WTC11 (cell line): ENCODE measurements at regions of chr9 and their contacts with region 1.

Region 1: GRCh38 chr9:97895695-97896332 is 26.5 kb downstream of the TRMO start:
- DNase-seq: peak; percentile 64
- ATAC-seq: peak; percentile 100
- H3K4me3 Mint-ChIP-seq: no peak overlapping the region
- H3K27ac Mint-ChIP-seq: no peak overlapping the region
- H3K4me1 Mint-ChIP-seq: peaks cover 2% of the 10 kb centered on the region; the same call in 1 of the 2 replicates
- H3K27me3 Mint-ChIP-seq: peaks cover 32% of the 10 kb centered on the region
- CTCF ChIP-seq: no peak

Region 2: DNA sequence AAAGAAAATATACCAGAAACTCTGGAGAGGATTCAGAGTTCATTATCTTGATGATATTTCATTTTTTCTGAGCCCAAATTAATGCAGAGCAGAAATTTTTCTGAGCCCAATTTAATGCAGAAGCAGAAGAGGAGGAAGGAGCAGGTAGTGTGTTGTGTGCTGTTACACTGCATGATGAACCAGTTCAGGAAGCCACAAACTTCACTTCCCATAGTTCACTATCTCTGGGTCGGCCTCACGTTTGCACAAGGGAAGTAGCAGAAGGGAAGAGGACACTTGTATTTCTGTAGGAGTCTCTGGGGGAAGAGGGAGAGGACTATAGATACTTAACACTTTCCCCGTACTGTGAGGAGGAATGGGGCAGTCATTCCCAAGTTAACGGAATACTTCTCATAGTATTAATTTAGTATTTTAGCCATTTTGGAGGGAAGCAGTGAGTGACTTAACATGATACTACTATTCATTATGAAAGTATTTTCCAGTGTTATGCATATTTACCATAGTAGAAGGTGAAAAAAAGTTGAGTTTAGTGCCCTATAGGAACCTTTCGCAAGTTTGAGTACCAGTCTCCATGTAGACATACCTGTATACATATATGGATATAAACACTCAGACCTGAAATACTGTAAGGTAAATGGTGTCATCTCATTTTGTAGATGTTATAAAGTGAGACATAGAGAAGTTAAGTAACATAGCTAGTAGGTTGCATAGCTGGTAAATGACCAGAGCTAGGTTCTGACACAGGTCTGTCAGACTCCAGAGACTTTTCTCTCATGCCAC is 228.7 kb before region 1 on chr9:
- CTCF ChIA-PET with region 1: no interaction called
- POLR2A ChIA-PET with region 1: no interaction called
- DNase-seq: no peak
- ATAC-seq: no peak
- H3K4me3 Mint-ChIP-seq: no peak overlapping the region
- H3K27ac Mint-ChIP-seq: no peak overlapping the region
- H3K4me1 Mint-ChIP-seq: no peaks in the 10 kb centered on the region
- H3K27me3 Mint-ChIP-seq: no peaks in the 10 kb centered on the region
- CTCF ChIP-seq: no peak

Region 3: DNA sequence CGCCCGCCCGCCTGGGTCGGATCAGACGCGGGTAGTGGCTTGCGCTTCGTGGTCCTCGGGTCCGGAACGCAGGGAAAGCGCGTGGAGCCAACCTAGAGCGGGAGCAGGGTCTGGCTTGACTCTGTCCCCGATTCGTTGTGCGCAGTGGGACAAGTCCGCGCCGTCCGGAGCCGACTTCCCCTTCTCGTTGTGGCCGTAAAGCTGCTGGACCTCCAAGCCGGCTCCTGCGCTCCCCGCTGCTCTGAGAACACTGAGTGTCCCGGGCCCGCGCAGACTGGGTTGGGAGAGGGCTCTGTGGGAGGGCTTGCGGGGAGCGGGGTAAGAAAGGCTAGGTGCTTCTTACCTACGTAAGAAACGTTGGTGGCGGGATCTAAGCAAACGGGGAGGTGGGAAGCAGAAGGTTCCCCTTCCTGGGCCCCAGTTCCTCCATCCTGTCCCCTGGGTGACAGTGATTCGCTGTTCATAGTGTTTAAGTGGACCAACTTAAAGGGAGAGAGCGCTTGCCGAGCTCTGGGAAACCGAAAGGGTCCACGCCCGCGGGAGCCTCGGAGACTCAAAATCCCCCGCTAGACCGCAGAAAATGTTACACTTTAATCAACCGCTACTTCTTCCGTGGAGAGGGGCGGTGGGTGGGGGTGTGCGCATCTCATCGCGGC is 47.1 kb before region 1 on chr9:
- CTCF ChIA-PET with region 1: interaction called, 10 read pairs
- POLR2A ChIA-PET with region 1: no interaction called
- DNase-seq: no peak
- ATAC-seq: no peak
- H3K4me3 Mint-ChIP-seq: peak overlapping the region; percentile 60
- H3K27ac Mint-ChIP-seq: no peak overlapping the region
- H3K4me1 Mint-ChIP-seq: peaks cover 37% of the 10 kb centered on the region
- H3K27me3 Mint-ChIP-seq: peaks cover 89% of the 10 kb centered on the region
- CTCF ChIP-seq: no peak

Region 4: DNA sequence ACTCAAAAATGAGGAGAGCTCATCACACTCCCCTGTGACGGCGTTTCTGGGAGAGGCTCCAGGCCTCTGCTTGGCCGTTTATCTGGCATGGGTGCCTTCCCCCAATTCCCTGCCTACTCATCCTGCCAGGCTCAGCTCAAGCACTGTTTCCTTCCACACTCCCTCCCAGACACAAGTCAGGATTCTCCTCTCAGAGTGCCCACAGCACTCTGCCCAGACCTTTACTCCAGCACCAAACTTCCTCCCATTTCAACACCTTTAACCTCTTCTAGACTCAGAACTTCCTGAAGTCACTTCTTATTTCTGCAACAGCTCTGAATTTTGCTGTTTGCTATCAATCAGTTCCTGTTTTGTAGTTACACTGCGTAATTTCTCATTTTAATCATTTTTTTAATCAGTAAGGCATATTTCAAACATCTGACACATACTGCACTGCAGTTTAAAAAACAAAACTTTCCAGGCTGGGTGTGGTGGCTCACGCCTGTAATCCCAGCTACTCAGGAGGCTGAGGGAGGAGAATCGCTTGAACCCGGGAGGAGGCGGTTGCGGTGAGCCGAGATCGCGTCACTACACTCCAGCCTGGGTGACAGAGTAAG is 10.5 kb after region 1 on chr9:
- CTCF ChIA-PET with region 1: interaction called, 70 read pairs
- POLR2A ChIA-PET with region 1: no interaction called
- DNase-seq: no peak
- ATAC-seq: no peak
- H3K4me3 Mint-ChIP-seq: no peak overlapping the region
- H3K27ac Mint-ChIP-seq: no peak overlapping the region
- H3K4me1 Mint-ChIP-seq: no peaks in the 10 kb centered on the region
- H3K27me3 Mint-ChIP-seq: no peaks in the 10 kb centered on the region
- CTCF ChIP-seq: no peak

Region 5: GRCh38 chr9:97921959-97922724 is 26.3 kb after region 1 on chr9 and contains the start of gene TRMO:
- CTCF ChIA-PET with region 1: interaction called, 10 read pairs
- POLR2A ChIA-PET with region 1: no interaction called
- DNase-seq: peak; percentile 93
- ATAC-seq: peak; percentile 92
- H3K4me3 Mint-ChIP-seq: peak within 1 kb of the TSS; percentile 69
- H3K27ac Mint-ChIP-seq: peak within 1 kb of the TSS; percentile 87
- H3K4me1 Mint-ChIP-seq: peaks cover 7% of the 10 kb centered on the region
- H3K27me3 Mint-ChIP-seq: peaks cover 56% of the 10 kb centered on the region
- CTCF ChIP-seq: peak; percentile 39; the same call in 1 of the 2 replicates
- total RNA-seq, gene TRMO: 3.3 to 4.6 TPM (median 3.9 TPM) in 3 replicates

Region 6: GRCh38 chr9:98129451-98129881 is 233.7 kb after region 1 on chr9:
- CTCF ChIA-PET with region 1: no interaction called
- POLR2A ChIA-PET with region 1: no interaction called
- DNase-seq: no peak
- ATAC-seq: no peak
- H3K4me3 Mint-ChIP-seq: no peak overlapping the region
- H3K27ac Mint-ChIP-seq: peak overlapping the region; percentile 19; the same call in 1 of the 2 replicates
- H3K4me1 Mint-ChIP-seq: peaks cover 6% of the 10 kb centered on the region
- H3K27me3 Mint-ChIP-seq: no peaks in the 10 kb centered on the region
- CTCF ChIP-seq: no peak

Region 7: GRCh38 chr9:98255578-98256296 is 359.9 kb after region 1 on chr9 and contains the start of gene TBC1D2:
- CTCF ChIA-PET with region 1: no interaction called
- POLR2A ChIA-PET with region 1: no interaction called
- DNase-seq: peak; percentile 98
- ATAC-seq: peak; percentile 90
- H3K4me3 Mint-ChIP-seq: peak within 1 kb of the TSS; percentile 93
- H3K27ac Mint-ChIP-seq: peak within 1 kb of the TSS; percentile 95
- H3K4me1 Mint-ChIP-seq: peaks cover 42% of the 10 kb centered on the region
- H3K27me3 Mint-ChIP-seq: no peaks in the 10 kb centered on the region
- CTCF ChIP-seq: no peak
- total RNA-seq, gene TBC1D2: 10.6 to 11.4 TPM (median 11.1 TPM) in 3 replicates